Activated T-helper 1 cell treated with anti-CD3 and anti-CD28 coated beads, Interleukin-12 subunit alpha, Interleukin-12 subunit beta, Interleukin-2, Interleukin-4 antibody, amounts not matched to agents 30 ng/mL and 10 ng/mL and 1 ng/mL, durations not matched to agents 14 hours and 24 hours and 36 hours (primary cell): ENCODE measurements at regions of chr5 and their contacts with region 1.

Region 1: DNA sequence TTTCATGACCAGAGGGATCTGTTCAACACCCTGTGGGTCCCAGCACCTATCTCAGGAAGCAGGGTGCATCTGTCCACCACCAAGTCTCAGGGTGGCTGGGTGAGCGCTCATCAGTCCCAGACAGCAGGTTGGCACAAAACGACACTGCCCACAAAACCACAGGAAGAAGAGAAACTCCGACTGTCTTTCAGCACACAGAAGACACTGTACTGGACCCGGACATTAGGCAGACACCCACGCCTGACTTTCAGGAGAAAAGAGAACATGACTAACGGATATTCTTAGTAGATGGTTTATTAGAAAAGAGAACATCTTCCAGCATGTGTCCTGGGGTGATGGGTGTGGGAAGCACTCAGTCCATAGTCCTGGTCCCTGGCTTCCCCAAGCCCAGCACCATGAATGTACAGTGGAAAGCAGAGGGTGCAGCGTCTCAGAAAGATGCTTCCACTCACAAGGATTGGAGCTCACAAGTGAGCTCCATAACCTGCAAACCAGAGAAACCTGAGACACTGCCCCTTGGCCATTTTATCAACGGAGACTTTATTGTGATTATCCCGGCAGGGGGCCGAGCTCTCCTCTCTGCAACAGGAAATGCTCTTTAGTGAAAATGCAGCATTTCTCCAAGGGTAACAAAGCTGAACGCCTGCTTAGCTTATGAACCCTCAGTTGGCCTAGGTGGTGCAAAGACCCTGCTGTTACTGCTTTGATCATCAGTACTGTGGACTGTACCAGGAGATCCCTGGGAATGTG is 35.8 kb upstream of the LCP2 start:
- DNase-seq: peak; percentile 41
- H3K4me3 Mint-ChIP-seq: peak overlapping the region; percentile 76
- H3K27ac Mint-ChIP-seq: no peak overlapping the region
- H3K4me1 Mint-ChIP-seq: peaks cover 8% of the 10 kb centered on the region
- H3K27me3 Mint-ChIP-seq: peaks cover 2% of the 10 kb centered on the region

Region 2: DNA sequence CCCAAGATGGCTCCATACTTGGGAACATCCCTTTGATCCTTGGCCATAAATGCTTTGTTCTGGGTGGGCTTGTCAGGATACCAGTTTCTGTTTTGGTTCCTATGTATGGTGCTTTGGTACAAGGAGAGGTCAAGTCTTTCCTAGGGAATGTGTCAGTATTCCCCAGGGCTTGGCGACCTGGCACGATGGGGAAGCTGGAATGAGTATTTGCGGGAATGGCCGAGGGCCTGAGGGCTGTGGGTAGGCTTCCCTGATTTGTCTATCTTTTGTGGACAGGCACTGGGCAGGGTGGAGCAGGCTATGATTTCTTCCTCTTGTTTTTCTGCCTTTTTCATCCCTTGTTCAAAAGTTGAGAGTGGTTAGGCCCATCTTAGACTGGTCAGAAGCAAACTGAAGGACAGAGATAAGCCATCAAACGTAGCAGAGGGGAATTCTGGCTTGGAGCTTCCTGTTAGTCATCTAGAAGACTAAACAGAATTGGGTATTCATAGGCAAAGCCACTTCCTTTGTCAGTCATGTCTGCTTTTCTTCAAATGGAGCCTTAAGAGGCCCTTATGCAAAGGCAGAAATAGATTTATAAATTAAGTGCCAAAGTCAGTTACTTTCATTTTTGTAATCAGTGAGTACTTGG is 682.5 kb before region 1 on chr5:
- intact Hi-C with region 1: loop called (anchors 5 kb)
- DNase-seq: peak; percentile 37
- H3K4me3 Mint-ChIP-seq: peak overlapping the region; percentile 72
- H3K27ac Mint-ChIP-seq: peak overlapping the region; percentile 99
- H3K4me1 Mint-ChIP-seq: peaks cover 99% of the 10 kb centered on the region
- H3K27me3 Mint-ChIP-seq: no peaks in the 10 kb centered on the region

Region 3: GRCh38 chr5:169997798-169998197 is 335.5 kb before region 1 on chr5:
- intact Hi-C with region 1: no loop called
- DNase-seq: no peak
- H3K4me3 Mint-ChIP-seq: no peak overlapping the region
- H3K27ac Mint-ChIP-seq: peak overlapping the region; percentile 25
- H3K4me1 Mint-ChIP-seq: no peaks in the 10 kb centered on the region
- H3K27me3 Mint-ChIP-seq: no peaks in the 10 kb centered on the region

Region 4: DNA sequence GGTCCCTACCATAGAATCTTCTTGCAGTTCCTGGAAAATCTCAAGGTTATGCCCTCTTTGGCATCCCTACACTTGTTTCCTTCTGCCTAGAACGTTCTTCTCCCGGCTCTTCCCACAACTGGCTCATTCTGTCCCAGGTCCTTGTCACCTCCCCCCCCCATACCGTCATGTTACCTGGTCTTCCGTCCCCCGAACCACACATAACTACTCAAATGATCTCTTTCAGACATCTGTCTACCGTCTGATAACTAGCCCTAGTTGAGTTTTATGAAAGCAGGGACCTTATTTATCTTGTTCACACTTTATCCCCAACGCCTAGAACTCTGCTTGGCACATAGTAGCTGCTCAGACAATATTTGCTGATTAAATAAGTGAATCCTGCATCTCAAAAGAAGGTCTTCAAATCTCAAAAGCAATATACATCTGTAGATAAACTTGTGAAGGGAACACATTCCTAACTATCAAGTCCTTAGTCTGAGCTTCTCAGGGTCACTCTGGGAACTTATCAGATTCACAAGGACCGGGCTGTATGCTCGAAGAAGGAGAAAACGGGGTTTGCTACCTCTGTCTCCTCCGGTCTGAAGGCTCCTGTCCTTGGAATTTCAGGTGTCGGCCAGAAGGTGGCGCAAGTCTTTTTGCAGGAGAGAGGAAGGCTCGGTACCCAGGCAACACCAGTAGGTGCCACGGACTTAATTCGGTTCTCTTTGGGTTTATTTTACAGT is 65.7 kb before region 1 on chr5:
- intact Hi-C with region 1: loop called (anchors 1 kb)
- DNase-seq: peak; percentile 66
- H3K4me3 Mint-ChIP-seq: peak overlapping the region; percentile 77
- H3K27ac Mint-ChIP-seq: peak overlapping the region; percentile 90
- H3K4me1 Mint-ChIP-seq: peaks cover 91% of the 10 kb centered on the region
- H3K27me3 Mint-ChIP-seq: no peaks in the 10 kb centered on the region

Region 5: DNA sequence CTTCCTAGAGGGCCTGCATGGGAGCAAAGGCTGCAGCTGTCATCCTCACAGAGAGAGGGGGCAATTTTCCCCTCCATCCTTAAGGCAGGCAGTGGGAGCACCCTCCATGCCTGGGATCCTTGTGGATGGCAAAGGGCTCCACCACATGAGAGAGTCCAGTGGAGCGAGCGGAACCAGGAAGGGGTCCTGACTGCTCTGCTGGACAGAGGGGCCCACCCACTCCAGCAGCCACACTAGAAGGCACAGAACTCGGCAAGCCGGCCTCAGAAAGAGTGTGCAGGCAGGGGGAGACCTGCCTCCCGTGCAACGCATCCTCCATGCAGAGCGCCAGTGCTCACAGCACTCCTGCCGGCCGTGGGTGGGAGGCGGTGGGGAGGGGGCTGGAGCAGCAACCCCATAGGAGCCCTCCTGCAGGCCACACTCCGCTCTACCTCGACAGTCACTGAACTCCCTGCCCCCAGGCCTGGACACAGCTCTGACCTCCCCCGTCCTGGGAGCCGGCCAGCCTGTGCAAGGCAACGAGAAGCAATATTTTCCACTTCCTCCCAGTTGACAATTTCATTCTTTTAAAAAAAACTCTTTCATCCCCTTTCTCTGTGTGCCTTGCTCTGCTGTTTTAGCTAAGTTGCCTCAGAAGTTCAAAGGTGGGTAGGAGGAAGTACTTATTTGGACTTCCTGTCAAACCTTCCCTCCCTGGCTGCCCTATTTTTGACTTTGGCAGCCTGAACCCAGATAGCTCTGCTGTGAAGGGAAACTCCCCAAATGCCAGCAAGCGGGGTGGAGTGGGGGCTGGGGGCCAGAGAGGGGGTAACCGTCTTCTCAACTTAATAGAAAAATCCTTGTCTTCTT is 30.5 kb before region 1 on chr5:
- intact Hi-C with region 1: loop called (anchors 1 kb)
- DNase-seq: peak; percentile 60
- H3K4me3 Mint-ChIP-seq: peak overlapping the region; percentile 66
- H3K27ac Mint-ChIP-seq: peak overlapping the region; percentile 90
- H3K4me1 Mint-ChIP-seq: peaks cover 70% of the 10 kb centered on the region
- H3K27me3 Mint-ChIP-seq: no peaks in the 10 kb centered on the region

Region 6: GRCh38 chr5:170319301-170319700 is 14.0 kb before region 1 on chr5:
- intact Hi-C with region 1: no loop called
- DNase-seq: no peak
- H3K4me3 Mint-ChIP-seq: no peak overlapping the region
- H3K27ac Mint-ChIP-seq: no peak overlapping the region
- H3K4me1 Mint-ChIP-seq: peaks cover 16% of the 10 kb centered on the region
- H3K27me3 Mint-ChIP-seq: no peaks in the 10 kb centered on the region

Region 7: GRCh38 chr5:170571875-170572852 is 238.8 kb after region 1 on chr5:
- intact Hi-C with region 1: loop called (anchors 5 kb)
- DNase-seq: peak; percentile 1
- H3K4me3 Mint-ChIP-seq: no peak overlapping the region
- H3K27ac Mint-ChIP-seq: peak overlapping the region; percentile 0
- H3K4me1 Mint-ChIP-seq: peaks cover 21% of the 10 kb centered on the region
- H3K27me3 Mint-ChIP-seq: peaks cover 35% of the 10 kb centered on the region